PC-3 (cell line): ENCODE measurements at regions of chr20 and their contacts with region 1.

Region 1: GRCh38 chr20:561437-562231 is 18.0 kb upstream of the CSNK2A1 start:
- DNase-seq: peak; percentile 87
- ATAC-seq: peak; percentile 88
- H3K4me3 ChIP-seq: no peak overlapping the region
- H3K27ac ChIP-seq: no peak overlapping the region
- H3K4me1 ChIP-seq: no peaks in the 10 kb centered on the region
- H3K27me3 ChIP-seq: no peaks in the 10 kb centered on the region
- CTCF ChIP-seq: peak; percentile 97

Region 2: DNA sequence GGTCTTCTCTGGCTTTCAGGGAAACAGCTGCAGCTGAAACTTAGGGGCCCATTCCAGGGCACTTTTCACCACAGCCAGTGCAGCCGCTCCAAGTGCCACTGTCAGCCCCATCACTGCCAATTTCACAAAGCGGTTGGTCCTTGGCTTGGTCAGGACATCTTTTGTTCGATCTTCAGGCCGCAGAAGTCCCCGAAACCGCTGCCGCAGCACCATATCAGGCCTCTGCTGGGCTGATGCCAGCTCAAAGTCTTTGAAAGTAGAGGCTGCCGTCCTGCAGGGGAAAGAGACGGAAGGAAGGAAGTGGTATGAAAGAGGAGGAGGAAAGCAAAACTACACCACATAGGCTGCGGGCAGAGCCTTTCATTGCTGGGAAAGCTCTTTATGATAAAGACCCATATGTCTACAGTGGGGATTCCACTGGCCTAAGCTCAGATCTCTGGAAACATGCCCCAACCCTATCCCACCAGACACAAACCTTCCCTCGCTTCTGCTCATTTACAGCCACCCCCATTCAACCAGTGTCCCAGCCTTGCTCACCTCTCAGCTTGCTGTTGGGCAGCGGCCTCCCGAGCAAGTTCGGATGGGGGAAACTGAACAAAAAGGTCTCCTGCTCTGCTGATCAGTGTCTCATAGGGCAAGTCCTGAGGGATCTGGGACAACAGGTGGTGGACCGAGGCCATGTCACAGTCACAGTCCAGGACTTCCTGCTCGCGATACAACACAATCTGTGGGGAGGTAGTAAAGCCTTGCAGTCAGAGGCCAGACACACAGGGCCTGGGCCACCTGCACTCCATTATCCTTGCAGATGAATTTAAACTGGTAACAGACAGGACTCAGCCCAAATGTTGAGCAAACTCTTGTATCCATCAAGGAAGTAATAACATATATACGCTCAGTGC is 122.8 kb before region 1 on chr20:
- CTCF ChIA-PET with region 1: no interaction called
- POLR2A ChIA-PET with region 1: no interaction called
- intact Hi-C with region 1: no loop called
- DNase-seq: no peak
- ATAC-seq: no peak
- H3K4me3 ChIP-seq: no peak overlapping the region
- H3K27ac ChIP-seq: no peak overlapping the region
- H3K4me1 ChIP-seq: no peaks in the 10 kb centered on the region
- H3K27me3 ChIP-seq: no peaks in the 10 kb centered on the region
- CTCF ChIP-seq: no peak

Region 3: GRCh38 chr20:539848-540247 is 21.8 kb before region 1 on chr20:
- CTCF ChIA-PET with region 1: no interaction called
- POLR2A ChIA-PET with region 1: no interaction called
- intact Hi-C with region 1: no loop called
- DNase-seq: peak; percentile 49
- ATAC-seq: no peak
- H3K4me3 ChIP-seq: no peak overlapping the region; the same call in 1 of the 2 replicates
- H3K27ac ChIP-seq: no peak overlapping the region
- H3K4me1 ChIP-seq: peaks cover 36% of the 10 kb centered on the region
- H3K27me3 ChIP-seq: no peaks in the 10 kb centered on the region
- CTCF ChIP-seq: no peak

Region 4: DNA sequence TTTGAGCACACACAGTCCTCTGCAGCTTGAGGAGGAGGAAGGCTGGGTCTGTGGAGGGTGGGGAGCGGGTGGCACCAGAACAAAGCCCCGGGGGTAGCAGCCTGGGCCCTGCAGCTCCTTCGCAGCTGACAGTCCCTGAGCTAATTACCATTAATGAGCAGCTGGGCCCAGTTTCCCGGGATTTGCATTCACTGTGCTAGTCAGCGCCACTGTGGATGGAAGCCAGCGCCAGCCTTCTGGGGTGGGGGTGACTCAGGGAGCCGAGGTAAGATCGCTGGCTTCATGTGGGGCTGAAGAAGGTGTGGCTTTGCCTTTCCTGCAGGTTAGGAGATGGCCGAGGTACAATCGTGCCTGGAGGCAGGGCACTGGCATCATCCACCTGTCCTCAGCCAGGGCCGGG is 72.9 kb after region 1 on chr20:
- CTCF ChIA-PET with region 1: no interaction called
- POLR2A ChIA-PET with region 1: no interaction called
- intact Hi-C with region 1: no loop called
- DNase-seq: no peak
- ATAC-seq: no peak
- H3K4me3 ChIP-seq: no peak overlapping the region
- H3K27ac ChIP-seq: no peak overlapping the region
- H3K4me1 ChIP-seq: no peaks in the 10 kb centered on the region
- H3K27me3 ChIP-seq: peaks cover 27% of the 10 kb centered on the region; the same call in 1 of the 2 replicates
- CTCF ChIP-seq: no peak

Region 5: GRCh38 chr20:645318-646106 is 83.9 kb after region 1 on chr20:
- CTCF ChIA-PET with region 1: interaction called, 10 read pairs
- POLR2A ChIA-PET with region 1: no interaction called
- intact Hi-C with region 1: loop called (anchors 1 kb)
- DNase-seq: peak; percentile 82
- ATAC-seq: peak; percentile 90
- H3K4me3 ChIP-seq: no peak overlapping the region
- H3K27ac ChIP-seq: no peak overlapping the region
- H3K4me1 ChIP-seq: no peaks in the 10 kb centered on the region
- H3K27me3 ChIP-seq: no peaks in the 10 kb centered on the region
- CTCF ChIP-seq: peak; percentile 96

Region 6: GRCh38 chr20:728248-728944 is 166.8 kb after region 1 on chr20:
- CTCF ChIA-PET with region 1: no interaction called
- POLR2A ChIA-PET with region 1: no interaction called
- intact Hi-C with region 1: loop called (anchors 2 kb)
- DNase-seq: peak; percentile 65
- ATAC-seq: peak; percentile 94
- H3K4me3 ChIP-seq: peak overlapping the region; percentile 62
- H3K27ac ChIP-seq: no peak overlapping the region
- H3K4me1 ChIP-seq: no peaks in the 10 kb centered on the region
- H3K27me3 ChIP-seq: peaks cover 33% of the 10 kb centered on the region
- CTCF ChIP-seq: peak; percentile 79

Region 7: DNA sequence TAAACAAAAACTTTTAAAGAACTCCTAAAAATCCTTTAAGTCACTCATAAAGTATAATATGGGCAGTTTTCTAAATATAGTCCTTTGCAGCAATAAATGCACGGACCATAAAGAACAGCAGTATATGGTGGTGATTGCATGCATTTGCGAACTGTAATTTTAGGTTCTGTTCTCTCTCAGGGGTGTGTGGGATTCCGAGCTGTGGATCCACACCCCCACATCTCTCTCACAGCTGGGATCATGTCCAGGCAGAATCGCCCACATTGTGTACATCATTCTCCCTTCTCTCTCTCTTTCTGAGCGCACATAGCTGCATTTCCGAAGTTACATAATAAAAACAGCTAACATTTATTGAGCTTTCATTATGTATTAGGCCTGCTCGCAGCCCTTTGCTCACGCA is 178.1 kb after region 1 on chr20:
- CTCF ChIA-PET with region 1: interaction called, 7 read pairs
- POLR2A ChIA-PET with region 1: no interaction called
- intact Hi-C with region 1: loop called (anchors 1 kb)
- DNase-seq: no peak
- ATAC-seq: no peak
- H3K4me3 ChIP-seq: no peak overlapping the region
- H3K27ac ChIP-seq: no peak overlapping the region
- H3K4me1 ChIP-seq: peaks cover 7% of the 10 kb centered on the region
- H3K27me3 ChIP-seq: no peaks in the 10 kb centered on the region
- CTCF ChIP-seq: no peak

Region 8: GRCh38 chr20:768426-768978 is 206.9 kb after region 1 on chr20 and contains the start of gene SLC52A3:
- CTCF ChIA-PET with region 1: interaction called, 8 read pairs
- POLR2A ChIA-PET with region 1: no interaction called
- intact Hi-C with region 1: loop called (anchors 1 kb)
- DNase-seq: peak; percentile 96
- ATAC-seq: peak; percentile 94
- H3K4me3 ChIP-seq: peak within 1 kb of the TSS; percentile 75
- H3K27ac ChIP-seq: peak within 1 kb of the TSS; percentile 71
- H3K4me1 ChIP-seq: peaks cover 13% of the 10 kb centered on the region
- H3K27me3 ChIP-seq: no peaks in the 10 kb centered on the region
- CTCF ChIP-seq: peak; percentile 92
- total RNA-seq, gene SLC52A3: 4.2 and 5.9 TPM in 2 replicates